Heart right ventricle (tissue), 16 donors: ENCODE measurements at regions of chr1 and their contacts with region 1.

Region 1: GRCh38 chr1:229270547-229271447 is at the start of gene RAB4A:
- DNase-seq: peak; percentile 86 to 90
- ATAC-seq: peak; percentile 88 to 97 (median 95)
- H3K4me3 ChIP-seq: peak within 1 kb of the TSS; percentile 57 to 74 (median 68)
- H3K27ac ChIP-seq: peak within 1 kb of the TSS; percentile 27 to 91 (median 86)
- H3K4me1 ChIP-seq: peaks cover 8 to 54% (median 37%) of the 10 kb centered on the region in 9 donors
- H3K27me3 ChIP-seq: no peaks in the 10 kb centered on the region
- CTCF ChIP-seq: no peak
- total RNA-seq, gene RAB4A: 94.8 to 131 (median 116) TPM

Region 2: GRCh38 chr1:229341774-229342655 is 71.2 kb after region 1 on chr1:
- intact Hi-C with region 1: loop called in 2 of 10 experiments (anchors 5 to 10 kb)
- DNase-seq: peak; percentile 81 to 87
- ATAC-seq: peak; percentile 95 to 96 (median 96)
- H3K4me3 ChIP-seq: peak overlapping the region; percentile 70 to 99 (median 94)
- H3K27ac ChIP-seq: peak overlapping the region in 9 of 10 donors; percentile 72 to 95 (median 89)
- H3K4me1 ChIP-seq: peaks cover 2 to 36% (median 20%) of the 10 kb centered on the region in 9 donors
- H3K27me3 ChIP-seq: peaks cover 0 to 4% (median 0%) of the 10 kb centered on the region in 7 donors
- CTCF ChIP-seq: no peak

Region 3: GRCh38 chr1:229507951-229508822 is 237.4 kb after region 1 on chr1 and contains the start of gene NUP133:
- intact Hi-C with region 1: loop called in 3 of 10 experiments (anchors 5 to 10 kb)
- DNase-seq: peak; percentile 99
- ATAC-seq: peak; percentile 98 to 99 (median 99)
- H3K4me3 ChIP-seq: peak within 1 kb of the TSS; percentile 78 to 100 (median 97)
- H3K27ac ChIP-seq: peak within 1 kb of the TSS; percentile 76 to 98 (median 92)
- H3K4me1 ChIP-seq: peaks cover 3 to 26% (median 20%) of the 10 kb centered on the region in 9 donors
- H3K27me3 ChIP-seq: no peaks in the 10 kb centered on the region
- CTCF ChIP-seq: no peak
- total RNA-seq, gene NUP133: 28.1 to 36.3 (median 31.4) TPM

Region 4: DNA sequence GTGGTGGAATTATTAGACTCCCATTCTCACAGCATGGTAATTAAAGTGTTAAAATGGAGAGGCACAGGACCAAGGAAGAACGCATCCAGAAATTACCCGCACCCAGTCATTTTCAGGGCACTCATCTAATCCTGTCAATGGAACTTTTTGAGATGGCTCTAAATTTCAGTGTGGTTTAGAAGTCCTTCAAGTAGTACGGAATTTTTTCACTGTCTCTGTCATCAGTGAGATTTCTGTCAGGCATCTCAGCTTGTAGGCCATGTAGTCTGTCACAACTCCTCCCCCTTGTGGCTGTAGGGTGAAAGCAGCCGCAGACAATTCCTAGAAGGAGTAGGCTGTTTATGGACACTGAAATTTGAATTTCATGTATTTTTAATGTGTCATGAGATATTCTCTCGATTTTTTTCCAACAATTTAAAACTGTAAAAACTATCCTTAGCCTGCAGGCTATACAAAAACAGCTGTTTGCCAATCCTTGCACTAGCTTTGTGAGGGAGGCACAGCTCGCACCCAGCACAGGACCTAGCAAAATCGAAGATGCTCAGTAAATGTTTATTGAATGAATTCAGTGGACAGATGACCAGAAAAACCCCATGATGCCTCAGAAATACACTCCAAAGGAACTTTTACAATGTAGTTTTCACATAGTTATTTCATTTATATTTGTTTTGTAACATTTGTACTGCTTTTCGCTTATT is 243.9 kb after region 1 on chr1:
- intact Hi-C with region 1: loop called in 3 of 10 experiments (anchors 5 to 10 kb)
- DNase-seq: peak; percentile 18 to 72
- ATAC-seq: peak in 7 of 8 donors; percentile 73 to 86 (median 82)
- H3K4me3 ChIP-seq: no peak overlapping the region
- H3K27ac ChIP-seq: no peak overlapping the region
- H3K4me1 ChIP-seq: peaks cover 0 to 5% (median 0%) of the 10 kb centered on the region in 9 donors
- H3K27me3 ChIP-seq: no peaks in the 10 kb centered on the region
- CTCF ChIP-seq: peak; percentile 57 to 88 (median 83)